ENCODE measurements at regions of chr7 and their contacts with region 1.

Region 1: GRCh38 chr7:39517240-39517639 is 49.0 kb upstream of the YAE1 start:
- DNase-seq: no peak
- H3K4me3 Mint-ChIP-seq: no peak overlapping the region
- H3K27ac Mint-ChIP-seq: no peak overlapping the region
- H3K4me1 Mint-ChIP-seq: no peaks in the 10 kb centered on the region
- H3K27me3 Mint-ChIP-seq: peaks cover 7% of the 10 kb centered on the region
- CTCF ChIP-seq: no peak

Region 2: GRCh38 chr7:39536951-39537350 is 19.7 kb after region 1 on chr7:
- CTCF ChIA-PET with region 1: interaction called, 10 read pairs
- intact Hi-C with region 1: no loop called
- DNase-seq: no peak
- H3K4me3 Mint-ChIP-seq: no peak overlapping the region
- H3K27ac Mint-ChIP-seq: no peak overlapping the region
- H3K4me1 Mint-ChIP-seq: no peaks in the 10 kb centered on the region
- H3K27me3 Mint-ChIP-seq: peaks cover 17% of the 10 kb centered on the region
- CTCF ChIP-seq: no peak

Region 3: DNA sequence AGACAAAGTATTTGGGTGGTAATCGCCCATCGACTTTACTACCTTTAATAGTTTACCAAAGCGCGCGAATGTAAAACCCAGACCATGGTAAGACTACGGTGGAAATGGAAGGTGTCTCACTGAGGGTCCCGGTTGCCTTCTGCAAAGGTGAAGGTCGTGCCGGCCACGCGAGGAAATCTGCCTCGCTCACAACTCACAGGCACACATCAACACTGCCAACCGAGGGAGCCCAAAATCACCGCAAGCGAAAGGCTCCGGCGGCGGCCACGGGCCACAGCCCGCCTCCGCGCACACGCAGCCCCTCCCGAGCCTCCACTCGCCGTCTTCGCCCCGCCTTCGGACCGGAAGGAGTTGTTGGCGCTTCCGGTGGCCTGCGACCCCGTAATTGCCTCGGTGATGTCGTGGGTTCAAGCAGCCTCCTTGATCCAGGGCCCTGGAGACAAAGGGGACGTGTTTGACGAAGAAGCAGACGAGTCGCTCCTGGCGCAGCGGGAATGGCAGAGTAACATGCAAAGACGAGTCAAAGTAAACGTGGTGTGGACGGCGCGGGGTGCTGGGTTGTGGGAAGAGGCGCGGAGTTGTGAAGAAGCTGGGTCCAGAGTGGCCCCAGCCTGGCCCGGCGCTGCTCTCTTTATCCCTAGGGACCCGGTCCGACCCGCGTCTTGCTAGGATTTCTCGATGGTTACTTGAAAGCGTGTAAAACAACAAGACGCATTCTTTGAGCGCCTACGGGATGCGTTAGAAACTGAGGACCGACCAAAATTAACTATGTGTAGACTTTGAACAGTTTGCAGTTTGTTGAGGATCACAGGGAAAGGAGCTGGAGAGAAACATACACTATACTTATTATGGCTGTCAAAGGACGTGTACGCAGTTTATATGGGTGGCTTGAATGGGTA is 49.0 kb after region 1 on chr7 and contains the start of gene YAE1:
- CTCF ChIA-PET with region 1: no interaction called
- intact Hi-C with region 1: no loop called
- DNase-seq: peak; percentile 90
- H3K4me3 Mint-ChIP-seq: peak within 1 kb of the TSS; percentile 88
- H3K27ac Mint-ChIP-seq: peak within 1 kb of the TSS; percentile 75
- H3K4me1 Mint-ChIP-seq: peaks cover 6% of the 10 kb centered on the region
- H3K27me3 Mint-ChIP-seq: no peaks in the 10 kb centered on the region
- CTCF ChIP-seq: no peak
- total RNA-seq, gene YAE1: 37.0 and 39.2 TPM in 2 replicates

Measured in Calu3 (cell line).